Cardiac septum (tissue), 1 donor: ENCODE measurements at regions of chr6 and their contacts with region 1.

Region 1: DNA sequence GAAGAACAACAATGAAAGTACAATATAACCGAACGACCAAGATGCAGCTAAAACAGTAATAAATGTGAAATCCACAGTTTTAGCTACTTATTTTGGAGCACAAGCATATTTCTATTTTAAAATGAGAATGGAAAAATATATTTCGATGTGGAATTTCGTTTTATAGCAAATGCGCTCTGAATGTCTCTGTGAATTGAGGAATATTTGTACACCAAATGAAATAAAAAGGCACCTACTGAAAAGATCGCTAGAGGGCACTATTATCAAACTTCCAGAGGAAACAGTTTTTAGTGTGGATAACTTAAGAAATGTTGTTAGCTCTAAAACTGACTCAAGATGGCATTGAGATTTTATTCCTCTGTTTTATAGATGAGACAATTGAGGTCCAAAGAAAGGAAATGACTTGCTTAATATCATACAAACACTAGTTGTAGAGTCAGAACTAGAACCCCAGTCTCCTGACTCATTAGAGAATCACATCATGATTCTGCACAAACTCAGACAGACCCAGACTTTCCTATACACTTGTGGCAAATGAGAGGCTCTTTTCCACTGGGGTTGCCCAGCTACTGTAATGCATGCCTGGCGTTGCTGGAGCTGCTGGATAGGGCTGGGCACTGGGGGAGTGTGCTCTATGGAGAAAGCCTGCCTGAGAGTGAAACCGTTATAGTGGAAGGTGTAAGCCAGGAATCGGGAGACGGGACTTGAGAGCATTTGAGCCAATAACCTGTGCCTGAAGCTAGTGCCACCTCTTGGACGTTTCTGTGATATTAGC is 51.9 kb downstream of the GCLC start:
- DNase-seq: no peak

Region 2: GRCh38 chr6:53565886-53566285 is 72.8 kb after region 1 on chr6:
- intact Hi-C with region 1: no loop called
- DNase-seq: no peak

Region 3: GRCh38 chr6:53651764-53652401 is 158.8 kb after region 1 on chr6:
- intact Hi-C with region 1: loop called (anchors 2 kb)
- DNase-seq: peak; percentile 87

Region 4: GRCh38 chr6:53725791-53726431 is 232.9 kb after region 1 on chr6:
- intact Hi-C with region 1: loop called (anchors 1 kb)
- DNase-seq: peak; percentile 87